ENCODE measurements at regions of chr2 and their contacts with region 1.

Region 1: DNA sequence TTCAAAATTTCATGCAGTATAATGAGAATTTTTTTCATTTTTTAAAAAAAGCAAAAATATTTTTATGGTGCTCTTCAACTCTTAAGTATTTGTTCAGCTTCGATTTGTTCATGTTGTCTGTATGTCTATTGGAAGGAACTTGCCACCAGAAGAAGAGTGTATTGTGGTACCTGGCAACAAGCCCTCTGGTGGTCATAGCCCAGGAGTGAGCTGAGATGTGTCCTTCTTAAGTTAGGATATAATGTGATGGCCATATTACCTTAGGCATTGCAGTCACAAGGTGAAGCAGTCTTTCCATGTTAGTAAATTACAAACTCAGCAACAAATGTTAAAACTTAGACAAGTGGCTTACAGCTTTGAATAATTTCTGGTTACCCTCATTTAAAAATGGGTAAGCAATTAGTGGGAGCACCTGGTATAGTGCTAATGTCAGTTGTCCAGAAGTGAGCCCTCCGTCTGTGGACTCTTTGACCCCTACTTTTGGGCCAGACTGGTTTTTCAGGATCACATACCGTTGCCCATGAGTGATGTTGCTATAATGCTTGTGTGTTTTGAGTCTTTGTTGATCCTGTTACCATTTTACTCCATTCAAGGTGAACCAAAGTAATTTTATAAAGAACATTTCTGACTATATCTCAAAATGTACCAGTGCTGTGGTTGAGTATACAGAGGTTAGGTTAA is 57.4 kb downstream of the MYO1B start:
- DNase-seq: peak; percentile 58
- ATAC-seq: peak; percentile 96
- H3K4me3 ChIP-seq: no peak overlapping the region
- H3K27ac ChIP-seq: no peak overlapping the region
- H3K4me1 ChIP-seq: peaks cover 18% of the 10 kb centered on the region
- H3K27me3 ChIP-seq: no peaks in the 10 kb centered on the region
- CTCF ChIP-seq: peak; percentile 64
- EP300 ChIP-seq: no peak
- POLR2A ChIP-seq: no peak
- RAD21 ChIP-seq: peak; percentile 58

Region 2: GRCh38 chr2:191165176-191165643 is 137.4 kb before region 1 on chr2:
- CTCF ChIA-PET with region 1: no interaction called
- POLR2A ChIA-PET with region 1: no interaction called
- in situ Hi-C with region 1: no loop called
- intact Hi-C with region 1: loop called (anchors 5 kb)
- DNase-seq: peak; percentile 23
- ATAC-seq: peak; percentile 82
- H3K4me3 ChIP-seq: no peak overlapping the region
- H3K27ac ChIP-seq: no peak overlapping the region
- H3K4me1 ChIP-seq: peaks cover 16% of the 10 kb centered on the region
- H3K27me3 ChIP-seq: no peaks in the 10 kb centered on the region
- CTCF ChIP-seq: peak; percentile 60
- EP300 ChIP-seq: no peak
- POLR2A ChIP-seq: no peak
- RAD21 ChIP-seq: no peak

Region 3: DNA sequence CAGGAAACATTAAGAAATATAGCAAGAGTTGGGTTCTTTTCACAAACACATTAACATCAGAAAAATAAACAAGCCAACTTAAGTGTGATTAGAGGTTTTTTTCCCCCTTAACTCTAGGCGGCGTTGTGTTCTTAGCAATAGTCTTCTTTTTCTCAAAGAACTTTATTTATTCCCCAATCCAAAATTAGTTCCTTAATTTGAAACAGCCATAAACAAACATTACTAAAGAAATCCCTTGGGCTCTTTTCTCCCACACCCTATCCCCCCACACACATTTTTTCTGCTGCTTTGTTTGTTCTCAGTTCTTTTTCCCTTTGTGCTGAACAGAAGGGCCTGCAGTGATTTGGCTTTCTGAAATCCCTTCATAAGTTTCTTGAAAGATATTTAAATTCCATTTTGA is 70.6 kb before region 1 on chr2:
- CTCF ChIA-PET with region 1: interaction called, 7 read pairs
- POLR2A ChIA-PET with region 1: no interaction called
- in situ Hi-C with region 1: no loop called
- intact Hi-C with region 1: loop called (anchors 1 kb)
- DNase-seq: no peak
- ATAC-seq: no peak; the same call in 2 of the 3 replicates
- H3K4me3 ChIP-seq: no peak overlapping the region
- H3K27ac ChIP-seq: no peak overlapping the region
- H3K4me1 ChIP-seq: no peaks in the 10 kb centered on the region
- H3K27me3 ChIP-seq: no peaks in the 10 kb centered on the region
- CTCF ChIP-seq: peak; percentile 66
- EP300 ChIP-seq: no peak
- POLR2A ChIP-seq: no peak
- RAD21 ChIP-seq: peak; percentile 69

Region 4: DNA sequence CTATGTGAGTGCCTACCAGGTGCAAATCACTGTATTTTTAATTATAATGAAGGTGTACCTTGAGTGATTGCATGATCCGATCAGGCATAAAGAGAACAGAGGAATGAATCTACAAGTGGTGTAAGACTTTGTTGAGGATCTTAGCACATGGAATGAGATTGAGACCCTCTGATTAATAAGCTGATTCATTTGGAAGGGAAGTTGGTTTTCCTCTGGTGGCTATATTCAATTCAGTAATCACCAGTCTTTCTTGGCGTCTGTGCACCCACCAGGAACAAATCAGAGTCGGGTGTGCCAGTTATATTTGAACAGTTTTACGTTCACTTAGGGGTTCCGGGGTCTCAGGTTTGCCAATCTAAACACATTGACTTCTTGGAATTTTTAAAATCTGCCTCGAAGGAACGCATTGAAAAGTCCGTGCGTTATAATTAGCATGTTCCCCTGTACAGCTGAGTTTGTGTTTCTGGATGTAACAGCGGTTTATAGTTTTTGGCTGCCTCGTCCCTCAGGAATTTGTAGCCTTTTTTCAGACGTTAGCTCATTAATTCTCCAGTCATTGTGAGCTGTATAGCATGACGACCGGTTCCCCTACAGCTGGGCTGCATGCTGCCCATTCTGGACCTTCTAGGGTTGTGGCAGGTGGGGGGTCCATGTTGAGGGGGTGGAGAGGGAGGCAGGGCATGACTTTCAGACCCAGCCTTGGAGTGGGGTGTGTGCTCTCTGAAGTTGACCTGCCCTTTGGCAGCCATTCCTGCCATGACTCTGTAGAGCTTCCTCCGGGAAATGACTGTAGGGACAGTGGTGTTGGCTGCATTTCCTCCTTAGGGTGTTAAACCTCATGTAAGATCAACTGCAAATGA is 37.1 kb before region 1 on chr2:
- CTCF ChIA-PET with region 1: no interaction called
- POLR2A ChIA-PET with region 1: no interaction called
- in situ Hi-C with region 1: no loop called
- intact Hi-C with region 1: loop called (anchors 1 kb)
- DNase-seq: no peak
- ATAC-seq: no peak
- H3K4me3 ChIP-seq: no peak overlapping the region
- H3K27ac ChIP-seq: no peak overlapping the region
- H3K4me1 ChIP-seq: peaks cover 57% of the 10 kb centered on the region
- H3K27me3 ChIP-seq: no peaks in the 10 kb centered on the region
- CTCF ChIP-seq: no peak
- EP300 ChIP-seq: no peak
- POLR2A ChIP-seq: no peak
- RAD21 ChIP-seq: no peak

Measured in HepG2 (cell line).